Activated CD4-positive, alpha-beta memory T cell treated with anti-CD3 and anti-CD28 coated beads for 36 hours (primary cell): ENCODE measurements at regions of chr1 and their contacts with region 1.

Region 1: DNA sequence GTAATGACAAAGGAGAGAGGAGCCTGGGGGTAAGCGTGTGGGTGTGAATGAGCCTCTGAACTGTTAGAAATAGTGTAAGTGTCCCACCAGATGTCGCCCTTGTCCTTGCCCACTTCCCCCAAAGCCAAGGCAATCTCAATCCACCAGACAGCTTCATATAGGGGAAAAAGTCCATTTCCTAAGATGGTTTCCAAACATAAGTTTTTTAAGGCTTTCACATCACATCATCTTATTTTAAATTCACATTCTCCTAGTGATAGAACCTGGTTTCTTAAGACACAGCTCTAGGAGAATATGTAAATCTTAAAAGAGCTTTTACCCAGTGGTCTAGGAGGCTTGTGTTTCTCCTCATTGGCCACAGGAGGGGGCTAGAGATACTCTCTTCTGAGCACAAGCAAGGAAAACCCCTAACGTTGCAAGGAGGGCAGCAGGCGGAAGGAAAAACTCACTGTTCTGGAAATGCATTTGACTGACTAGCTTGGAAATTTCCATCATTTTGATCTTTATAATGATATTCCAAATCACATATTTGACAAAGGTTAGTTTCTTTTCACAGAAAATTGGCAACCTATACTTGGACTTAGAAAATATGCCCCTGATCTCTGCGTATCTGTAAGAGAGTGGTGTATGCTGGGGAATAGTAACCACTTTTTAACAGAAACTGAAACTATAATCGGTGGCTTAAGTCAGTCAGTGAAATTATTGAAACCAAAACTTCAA is 51.9 kb upstream of the LPAR3 start:
- DNase-seq: peak; percentile 72
- H3K4me3 Mint-ChIP-seq: peak overlapping the region; percentile 75
- H3K27ac Mint-ChIP-seq: peak overlapping the region; percentile 90
- H3K4me1 Mint-ChIP-seq: peaks cover 26% of the 10 kb centered on the region
- H3K27me3 Mint-ChIP-seq: no peaks in the 10 kb centered on the region

Region 2: GRCh38 chr1:84913555-84913892 is 31.4 kb before region 1 on chr1:
- CTCF ChIA-PET with region 1: no interaction called
- POLR2A ChIA-PET with region 1: no interaction called
- intact Hi-C with region 1: no loop called
- DNase-seq: no peak
- H3K4me3 Mint-ChIP-seq: no peak overlapping the region
- H3K27ac Mint-ChIP-seq: no peak overlapping the region
- H3K4me1 Mint-ChIP-seq: no peaks in the 10 kb centered on the region
- H3K27me3 Mint-ChIP-seq: peaks cover 3% of the 10 kb centered on the region

Region 3: DNA sequence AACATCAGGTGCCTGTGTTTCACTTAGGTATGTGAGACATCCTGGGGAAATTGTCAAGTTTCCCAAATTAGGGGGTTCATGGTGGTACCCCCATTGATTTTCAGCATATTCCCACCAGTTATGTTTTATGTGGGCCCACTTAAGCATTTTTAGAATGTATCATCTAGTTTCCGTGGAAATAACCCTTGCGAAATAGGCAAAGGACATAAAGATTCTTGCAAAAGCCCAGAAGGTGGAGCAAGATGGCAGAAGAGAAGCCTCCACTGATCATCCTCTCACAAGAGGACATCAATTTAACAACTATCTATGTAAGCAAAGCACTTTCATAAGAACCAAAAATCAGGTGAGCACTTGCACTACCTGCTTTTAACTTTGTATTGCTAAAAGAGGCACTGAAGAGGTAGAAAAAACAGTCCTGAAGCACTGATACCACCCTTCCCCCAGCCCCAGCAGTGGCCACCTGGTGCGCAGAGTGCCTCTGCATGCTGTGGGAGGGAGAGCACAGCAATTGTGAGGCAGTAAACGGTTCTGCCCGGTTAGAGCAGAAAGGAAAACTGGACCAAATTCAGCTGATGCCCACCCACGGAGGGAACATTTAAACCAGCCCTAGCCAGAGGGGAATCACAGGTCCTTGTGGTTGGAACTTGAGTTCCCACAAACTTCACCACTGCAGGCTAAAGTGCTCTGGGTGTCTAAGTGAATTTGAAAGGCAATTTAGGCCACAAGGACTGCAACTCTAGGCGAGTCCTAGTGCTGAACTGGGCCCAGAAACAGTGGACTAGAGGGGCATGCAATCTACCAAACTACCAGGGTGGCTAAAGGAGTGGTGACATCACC is 28.8 kb after region 1 on chr1:
- CTCF ChIA-PET with region 1: interaction called, 20 read pairs
- POLR2A ChIA-PET with region 1: no interaction called
- intact Hi-C with region 1: loop called (anchors 1 kb)
- DNase-seq: peak; percentile 37
- H3K4me3 Mint-ChIP-seq: no peak overlapping the region
- H3K27ac Mint-ChIP-seq: peak overlapping the region; percentile 55
- H3K4me1 Mint-ChIP-seq: peaks cover 76% of the 10 kb centered on the region
- H3K27me3 Mint-ChIP-seq: no peaks in the 10 kb centered on the region

Region 4: GRCh38 chr1:85027242-85027983 is 82.5 kb after region 1 on chr1:
- CTCF ChIA-PET with region 1: interaction called, 175 read pairs
- POLR2A ChIA-PET with region 1: interaction called, 8 read pairs
- intact Hi-C with region 1: loop called (anchors 1 kb)
- DNase-seq: peak; percentile 25
- H3K4me3 Mint-ChIP-seq: no peak overlapping the region
- H3K27ac Mint-ChIP-seq: no peak overlapping the region
- H3K4me1 Mint-ChIP-seq: peaks cover 12% of the 10 kb centered on the region
- H3K27me3 Mint-ChIP-seq: no peaks in the 10 kb centered on the region

Region 5: DNA sequence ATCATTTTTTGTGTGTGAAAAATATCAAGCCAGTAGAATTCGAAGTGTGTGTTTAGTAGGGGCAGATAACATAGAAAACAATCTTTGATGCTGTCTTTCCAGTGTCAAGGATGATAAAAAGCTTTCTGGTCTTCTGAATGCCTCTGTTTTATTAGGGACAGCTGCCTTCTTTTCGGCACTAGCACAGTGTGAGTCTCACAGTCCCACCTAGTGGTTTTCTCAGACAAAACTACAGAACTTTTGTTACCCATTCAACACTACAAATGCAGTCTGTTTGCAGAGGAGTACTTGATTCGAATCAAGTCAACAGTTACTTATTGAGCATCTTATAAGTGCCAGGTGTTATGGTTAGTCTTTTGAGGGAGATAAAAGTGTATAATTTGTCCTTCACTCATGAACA is 134.0 kb after region 1 on chr1:
- CTCF ChIA-PET with region 1: interaction called, 12 read pairs
- POLR2A ChIA-PET with region 1: no interaction called
- intact Hi-C with region 1: loop called (anchors 1 kb)
- DNase-seq: no peak
- H3K4me3 Mint-ChIP-seq: no peak overlapping the region
- H3K27ac Mint-ChIP-seq: no peak overlapping the region
- H3K4me1 Mint-ChIP-seq: no peaks in the 10 kb centered on the region
- H3K27me3 Mint-ChIP-seq: peaks cover 6% of the 10 kb centered on the region

Region 6: GRCh38 chr1:85230305-85230980 is 285.5 kb after region 1 on chr1:
- CTCF ChIA-PET with region 1: interaction called, 10 read pairs
- POLR2A ChIA-PET with region 1: no interaction called
- intact Hi-C with region 1: no loop called
- DNase-seq: no peak
- H3K4me3 Mint-ChIP-seq: no peak overlapping the region
- H3K27ac Mint-ChIP-seq: no peak overlapping the region
- H3K4me1 Mint-ChIP-seq: no peaks in the 10 kb centered on the region
- H3K27me3 Mint-ChIP-seq: peaks cover 2% of the 10 kb centered on the region

Region 7: DNA sequence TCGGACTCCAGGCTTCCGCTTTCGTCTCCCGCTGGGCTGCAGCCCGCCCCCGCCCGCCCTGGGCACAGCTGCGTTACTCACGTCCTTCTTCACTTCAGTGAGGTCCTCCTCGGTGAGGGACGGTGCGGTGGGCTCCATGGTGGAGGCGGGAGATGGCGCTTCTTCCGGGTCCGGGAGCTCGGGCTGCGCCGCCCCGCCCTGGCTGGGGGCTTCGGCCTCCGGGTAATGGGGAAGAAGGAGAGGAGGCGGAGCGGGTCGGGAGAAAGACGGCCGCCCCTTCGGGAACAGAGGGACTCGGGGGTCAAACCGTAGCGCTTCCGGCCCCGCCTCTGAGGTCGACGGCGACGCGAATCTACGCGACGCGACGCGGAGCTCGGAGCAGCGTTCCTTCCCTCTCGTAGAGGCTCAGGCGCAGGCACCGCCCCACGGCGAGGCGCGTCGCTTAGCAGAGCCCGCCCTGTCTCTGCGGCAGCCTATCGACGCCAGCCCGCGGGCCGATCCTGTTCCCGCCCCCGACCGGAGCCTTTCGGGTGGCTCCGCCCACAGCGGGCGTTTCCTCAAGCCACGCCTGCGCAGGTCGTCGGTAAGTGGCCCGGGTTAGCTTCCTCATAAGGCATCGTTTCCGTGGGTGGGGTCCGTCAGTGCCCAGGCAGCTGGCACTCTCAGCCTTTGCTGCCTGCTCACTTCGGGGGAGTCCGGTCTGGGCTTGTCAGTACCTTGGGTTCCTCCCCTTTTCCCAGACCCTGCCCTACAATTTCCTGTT is 331.5 kb after region 1 on chr1 and contains the start of gene BCL10:
- CTCF ChIA-PET with region 1: interaction called, 13 read pairs
- POLR2A ChIA-PET with region 1: no interaction called
- intact Hi-C with region 1: no loop called
- DNase-seq: peak; percentile 98
- H3K4me3 Mint-ChIP-seq: peak within 1 kb of the TSS; percentile 82
- H3K27ac Mint-ChIP-seq: peak within 1 kb of the TSS; percentile 92
- H3K4me1 Mint-ChIP-seq: peaks cover 50% of the 10 kb centered on the region
- H3K27me3 Mint-ChIP-seq: peaks cover 5% of the 10 kb centered on the region
- total RNA-seq, gene BCL10: 31.1 to 31.5 TPM

Region 8: DNA sequence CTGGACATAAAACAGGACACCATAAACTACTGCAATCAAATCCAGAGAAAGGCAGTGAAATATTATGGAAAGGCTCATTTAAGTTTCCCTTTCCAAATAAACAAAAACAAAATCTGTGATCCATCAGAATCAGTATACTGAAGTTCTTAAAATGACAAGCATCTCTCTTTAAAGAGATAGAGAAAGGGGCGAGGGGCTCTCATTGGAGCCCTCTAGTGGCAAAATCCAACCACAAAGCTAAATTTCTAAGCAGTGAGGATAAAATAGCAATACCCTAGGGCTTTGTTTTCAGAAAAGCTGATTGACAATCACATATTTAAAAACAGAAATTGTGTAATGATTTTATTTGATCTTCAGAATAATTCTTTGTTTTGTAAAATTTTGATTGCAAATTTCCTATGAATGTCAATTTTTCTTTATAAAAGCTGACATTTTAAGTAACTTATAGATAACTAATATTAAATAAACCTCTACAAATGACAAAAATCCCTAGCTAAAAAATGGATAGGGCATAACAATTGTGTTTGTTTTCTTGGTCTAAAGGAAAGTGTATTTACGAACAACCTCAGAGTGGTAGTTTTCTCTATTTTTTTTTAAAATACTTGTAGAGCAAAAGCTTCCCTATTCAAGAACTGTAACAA is 1073.5 kb after region 1 on chr1:
- CTCF ChIA-PET with region 1: no interaction called
- POLR2A ChIA-PET with region 1: no interaction called
- intact Hi-C with region 1: loop called (anchors 10 kb)
- DNase-seq: no peak
- H3K4me3 Mint-ChIP-seq: no peak overlapping the region
- H3K27ac Mint-ChIP-seq: no peak overlapping the region
- H3K4me1 Mint-ChIP-seq: no peaks in the 10 kb centered on the region
- H3K27me3 Mint-ChIP-seq: no peaks in the 10 kb centered on the region